Activated CD4-positive, alpha-beta memory T cell treated with anti-CD3 and anti-CD28 coated beads, Interleukin-2, amount 10 ng/mL, durations not matched to agents 7 days and 5 days (primary cell): ENCODE measurements at regions of chr3 and their contacts with region 1.

Region 1: DNA sequence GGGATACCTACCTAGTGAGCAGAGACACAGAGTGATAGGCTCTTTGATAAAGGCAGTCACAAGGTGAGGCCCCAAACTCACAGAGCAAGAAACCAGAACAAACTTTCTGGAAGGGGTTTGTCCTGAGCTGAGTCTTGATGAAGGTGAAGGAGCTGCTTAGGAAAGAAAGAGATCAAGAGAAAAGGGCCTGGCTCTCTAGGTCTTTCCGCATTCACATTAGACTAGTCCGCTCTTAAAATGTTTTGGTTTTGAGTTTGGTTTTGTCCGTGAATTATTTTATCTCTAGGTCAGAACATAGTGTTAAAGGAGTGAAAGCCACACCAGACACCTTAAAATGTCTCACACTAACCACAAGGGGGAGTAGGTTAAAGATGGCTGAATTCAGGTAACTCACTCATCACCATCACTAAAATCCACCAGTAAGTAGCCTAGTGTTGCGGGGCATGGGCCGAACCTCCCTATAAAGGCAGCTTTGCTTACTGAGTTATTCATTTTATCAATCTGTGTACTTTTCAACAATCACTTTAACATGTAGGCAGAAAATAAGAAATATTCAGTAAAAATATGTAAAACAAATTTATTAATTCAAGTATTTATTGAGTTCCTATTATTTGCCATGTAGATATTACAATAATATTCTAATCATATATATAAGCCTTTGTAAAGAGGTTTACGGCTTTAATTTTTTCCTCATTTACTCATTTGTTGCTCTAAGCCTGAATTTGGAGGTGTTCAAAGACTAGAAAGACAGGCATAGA is 121.5 kb upstream of the TSC22D2 start:
- DNase-seq: no peak
- H3K4me3 Mint-ChIP-seq: no peak overlapping the region
- H3K27ac Mint-ChIP-seq: no peak overlapping the region
- H3K4me1 Mint-ChIP-seq: no peaks in the 10 kb centered on the region
- H3K27me3 Mint-ChIP-seq: peaks cover 46% of the 10 kb centered on the region

Region 2: DNA sequence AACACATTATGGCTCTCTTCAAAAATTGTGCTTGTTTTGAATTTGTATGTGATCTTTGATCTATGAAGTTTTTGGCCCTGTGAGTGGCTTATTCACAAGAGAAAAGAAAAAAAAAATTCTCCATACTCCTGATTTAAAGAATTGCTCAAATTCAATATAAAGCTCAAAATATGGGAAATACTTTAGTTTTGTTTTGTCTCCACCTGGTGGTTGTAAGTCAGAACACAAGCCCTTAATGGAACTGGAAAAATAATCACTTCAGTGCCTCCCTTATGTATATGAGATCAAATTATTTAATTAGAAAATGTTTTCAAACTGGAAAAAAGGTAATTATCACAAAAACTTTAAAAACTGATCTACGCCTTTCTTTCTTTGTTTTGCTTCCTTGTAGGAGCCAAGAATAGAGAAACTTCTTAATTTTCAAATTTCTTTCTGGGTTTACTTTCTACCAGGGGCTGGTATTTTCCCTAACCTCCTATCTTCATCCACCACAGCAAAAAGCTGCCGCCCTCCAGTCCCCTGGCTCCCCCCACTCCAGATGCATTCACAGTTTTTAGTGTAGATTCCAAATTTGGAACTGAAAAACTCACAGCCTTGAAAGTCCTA is 209.1 kb after region 1 on chr3:
- CTCF ChIA-PET with region 1: interaction called, 49 read pairs
- POLR2A ChIA-PET with region 1: no interaction called
- DNase-seq: no peak
- H3K4me3 Mint-ChIP-seq: no peak overlapping the region
- H3K27ac Mint-ChIP-seq: no peak overlapping the region
- H3K4me1 Mint-ChIP-seq: no peaks in the 10 kb centered on the region
- H3K27me3 Mint-ChIP-seq: no peaks in the 10 kb centered on the region